ENCODE measurements at regions of chr13 and their contacts with region 1.

Region 1: DNA sequence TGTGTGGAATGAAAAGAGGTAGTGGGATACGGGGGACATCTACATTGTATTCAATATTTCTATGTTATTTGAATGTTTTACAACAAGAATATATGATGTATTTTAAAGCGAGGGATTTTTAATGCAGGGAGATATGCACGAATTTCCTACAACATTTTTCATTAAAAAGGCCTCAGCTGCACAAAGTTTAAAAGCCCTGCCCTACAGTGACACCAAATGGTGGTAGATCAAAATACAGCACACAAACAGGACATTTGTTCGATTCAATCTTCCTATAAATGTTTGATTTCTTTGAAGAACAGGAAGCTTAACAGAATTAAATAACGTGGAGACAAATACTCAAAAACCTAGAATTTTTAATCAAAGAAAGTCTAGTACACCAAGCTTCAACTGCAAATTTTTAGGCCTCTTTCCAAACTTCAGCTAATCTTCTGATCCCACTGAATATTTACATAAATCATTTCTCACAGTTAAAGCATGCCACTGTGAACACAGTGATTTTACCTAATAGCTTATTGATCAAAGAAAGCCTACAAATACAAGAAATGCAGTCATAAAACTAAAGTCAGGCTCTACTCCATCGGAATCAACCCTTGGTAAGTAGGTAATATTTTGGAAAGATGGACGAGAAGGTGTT is 257.2 kb downstream of the DIAPH3 start:
- DNase-seq: peak; percentile 8
- H3K4me3 ChIP-seq: no peak overlapping the region
- H3K27ac ChIP-seq: no peak overlapping the region
- H3K27me3 ChIP-seq: no peaks in the 10 kb centered on the region
- CTCF ChIP-seq: peak; percentile 75

Region 2: GRCh38 chr13:58680115-58680514 is 1226.4 kb before region 1 on chr13:
- CTCF ChIA-PET with region 1: no interaction called
- POLR2A ChIA-PET with region 1: no interaction called
- DNase-seq: no peak
- H3K4me3 ChIP-seq: no peak overlapping the region
- H3K27ac ChIP-seq: no peak overlapping the region
- H3K27me3 ChIP-seq: no peaks in the 10 kb centered on the region
- CTCF ChIP-seq: no peak

Region 3: DNA sequence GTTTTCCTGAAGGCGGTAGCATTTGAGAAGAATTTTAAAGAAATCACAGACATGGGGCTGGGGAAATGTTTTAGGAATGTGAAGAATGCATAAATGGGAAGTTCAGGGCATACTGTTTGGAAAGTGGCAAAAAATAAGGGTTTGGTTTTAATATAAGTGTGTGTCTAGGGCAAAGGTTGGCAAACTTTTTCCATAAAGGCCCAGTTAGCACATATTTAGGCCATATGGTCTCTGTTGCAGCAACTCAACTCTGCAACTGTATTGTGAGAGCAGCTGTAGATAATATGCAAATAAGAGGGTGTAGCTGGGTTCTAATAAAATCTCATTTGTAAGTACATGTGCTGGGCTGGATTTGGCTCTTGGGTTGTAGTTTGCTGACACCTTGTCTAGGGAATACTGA is 264.7 kb before region 1 on chr13:
- CTCF ChIA-PET with region 1: no interaction called
- POLR2A ChIA-PET with region 1: no interaction called
- DNase-seq: no peak
- H3K4me3 ChIP-seq: no peak overlapping the region
- H3K27ac ChIP-seq: no peak overlapping the region
- H3K27me3 ChIP-seq: peaks cover 7% of the 10 kb centered on the region
- CTCF ChIP-seq: no peak

Region 4: DNA sequence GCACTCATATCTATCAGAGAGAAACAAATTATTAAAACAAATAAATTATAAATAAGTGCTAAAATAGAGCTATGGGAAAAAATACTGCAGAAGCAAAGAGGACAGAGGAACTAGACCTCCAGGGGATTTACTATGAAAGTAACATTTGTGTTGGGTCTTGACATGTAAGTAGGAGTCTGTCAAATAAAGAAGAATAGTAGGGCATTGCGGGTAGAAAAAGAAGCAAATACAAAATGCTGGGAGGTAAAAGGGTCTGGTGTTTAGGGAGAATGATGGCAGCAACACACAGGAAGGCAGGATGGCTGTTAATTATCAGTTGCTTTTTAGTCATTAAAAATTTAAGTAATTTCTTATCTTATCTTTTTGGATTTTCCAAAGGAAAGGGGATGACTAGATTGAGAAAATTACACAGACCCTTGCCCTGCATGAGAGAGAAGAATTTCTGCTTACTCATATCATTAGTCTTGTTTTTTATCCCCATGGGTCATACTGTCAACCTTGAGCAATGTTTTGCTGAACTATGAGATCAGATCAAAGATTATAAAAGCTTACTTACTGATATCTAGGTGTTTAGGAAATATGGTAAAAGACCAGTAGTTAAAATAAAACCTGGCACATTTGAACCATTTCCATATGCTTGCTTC is 215.6 kb before region 1 on chr13:
- CTCF ChIA-PET with region 1: interaction called, 10 read pairs
- POLR2A ChIA-PET with region 1: no interaction called
- DNase-seq: no peak
- H3K4me3 ChIP-seq: no peak overlapping the region
- H3K27ac ChIP-seq: no peak overlapping the region
- H3K27me3 ChIP-seq: no peaks in the 10 kb centered on the region
- CTCF ChIP-seq: no peak

Region 5: DNA sequence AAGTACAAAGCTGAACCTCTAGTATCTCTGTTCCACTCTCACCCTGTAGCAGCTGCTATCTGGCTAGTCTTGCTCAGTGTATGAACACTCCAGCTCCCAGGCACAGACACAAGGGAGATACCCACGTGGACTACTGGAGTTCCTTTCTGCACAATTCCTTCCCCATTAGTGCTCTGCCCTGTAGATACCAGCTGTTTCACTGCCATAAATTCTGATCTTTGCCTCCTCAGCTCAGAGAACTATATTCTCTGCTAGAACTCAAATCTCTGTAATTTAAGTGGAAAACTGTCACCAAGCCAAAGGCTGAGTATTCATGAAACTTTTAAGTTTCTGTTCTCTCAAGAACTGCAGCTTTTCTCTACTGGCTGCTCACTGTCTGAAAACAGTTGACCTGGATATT is 16.5 kb before region 1 on chr13:
- CTCF ChIA-PET with region 1: interaction called, 23 read pairs
- POLR2A ChIA-PET with region 1: no interaction called
- DNase-seq: no peak
- H3K4me3 ChIP-seq: no peak overlapping the region
- H3K27ac ChIP-seq: no peak overlapping the region
- H3K27me3 ChIP-seq: no peaks in the 10 kb centered on the region
- CTCF ChIP-seq: no peak

Region 6: DNA sequence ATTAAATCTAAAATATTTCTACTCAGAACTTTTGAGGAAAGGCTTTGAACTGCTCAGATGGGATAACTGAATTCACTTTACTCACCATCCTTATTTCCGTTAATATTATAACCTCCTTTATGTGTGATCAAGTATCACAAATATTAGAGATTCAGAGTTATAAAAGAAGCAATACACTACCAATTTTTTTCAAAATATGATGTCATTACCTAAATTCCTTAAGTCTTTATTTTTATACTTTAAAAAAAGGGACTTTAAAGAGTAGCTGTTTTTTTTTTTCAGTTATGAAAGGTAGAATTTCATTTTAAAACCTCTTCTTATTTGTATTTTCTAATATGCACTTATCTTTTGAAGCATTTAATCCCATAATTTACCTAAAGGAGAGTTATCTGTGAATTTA is 17.7 kb after region 1 on chr13:
- CTCF ChIA-PET with region 1: interaction called, 12 read pairs
- POLR2A ChIA-PET with region 1: no interaction called
- DNase-seq: no peak
- H3K4me3 ChIP-seq: no peak overlapping the region
- H3K27ac ChIP-seq: no peak overlapping the region
- H3K27me3 ChIP-seq: no peaks in the 10 kb centered on the region
- CTCF ChIP-seq: no peak

Region 7: DNA sequence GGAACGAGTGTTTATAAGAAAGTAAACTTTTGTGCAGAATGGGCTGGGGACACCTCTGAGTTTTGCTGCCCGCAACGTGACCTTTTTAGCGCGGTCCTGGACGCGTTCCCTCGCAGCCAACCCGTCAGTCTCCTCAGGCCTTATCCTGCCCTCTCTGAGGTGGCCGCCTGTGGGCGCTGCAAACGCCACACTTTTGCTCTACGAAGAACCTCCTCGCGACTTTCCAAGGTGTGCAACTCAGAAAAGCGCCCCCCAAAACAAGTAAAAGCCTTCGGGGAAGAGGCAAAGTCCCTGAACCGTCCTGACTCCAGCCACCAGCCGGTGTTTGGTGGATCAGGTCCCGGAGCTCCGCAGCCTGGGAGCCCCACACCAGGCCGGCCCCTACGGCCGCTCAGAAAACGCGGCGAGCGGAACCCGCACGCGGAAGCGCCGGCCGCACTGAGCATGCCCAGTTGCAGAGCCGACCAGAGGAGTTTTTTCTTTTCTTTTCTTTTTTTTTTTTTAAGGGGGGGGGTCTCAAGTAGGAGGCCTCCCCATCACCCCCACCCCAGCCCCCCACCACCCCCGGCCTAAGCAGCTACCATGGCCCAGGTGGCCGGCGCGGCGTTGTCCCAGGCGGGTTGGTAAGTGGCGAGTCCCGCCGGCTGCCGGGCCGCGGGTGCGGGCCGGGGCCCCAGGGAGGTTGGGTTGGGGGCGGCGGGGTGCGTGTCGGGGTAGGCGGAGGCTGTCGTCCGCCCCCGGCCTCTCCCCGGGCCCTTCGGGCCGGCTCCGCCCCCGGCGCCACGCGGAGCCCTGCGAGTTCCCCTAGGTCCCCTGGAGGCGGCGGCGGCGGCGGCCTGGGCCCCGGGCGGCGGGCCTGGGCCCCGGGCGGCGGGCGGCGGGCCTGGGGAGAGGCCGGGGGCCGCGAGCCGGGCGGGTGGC is 490.5 kb after region 1 on chr13 and contains the start of gene TDRD3:
- CTCF ChIA-PET with region 1: interaction called, 15 read pairs
- POLR2A ChIA-PET with region 1: no interaction called
- DNase-seq: peak; percentile 62
- H3K4me3 ChIP-seq: peak within 1 kb of the TSS; percentile 87
- H3K27ac ChIP-seq: peak within 1 kb of the TSS; percentile 92
- H3K27me3 ChIP-seq: no peaks in the 10 kb centered on the region
- CTCF ChIP-seq: peak; percentile 84
- polyA plus RNA-seq, gene TDRD3: 8.3 and 10.8 TPM in 2 replicates

Measured in AG04450 (cell line).